ENCODE measurements at regions of chr4 and their contacts with region 1.

Region 1: GRCh38 chr4:98928505-98929340 is at the start of gene EIF4E:
- DNase-seq: peak; percentile 90 to 100 (median 95)
- ATAC-seq: peak; percentile 82
- H3K4me3 ChIP-seq: peak within 1 kb of the TSS; percentile 96
- H3K4me3 Mint-ChIP-seq: peak within 1 kb of the TSS; percentile 98
- H3K27ac ChIP-seq: peak within 1 kb of the TSS; percentile 85 to 94
- H3K27ac Mint-ChIP-seq: peak within 1 kb of the TSS; percentile 98
- H3K4me1 ChIP-seq: peaks cover 17% of the 10 kb centered on the region
- H3K4me1 Mint-ChIP-seq: peaks cover 46% of the 10 kb centered on the region
- H3K27me3 ChIP-seq: no peaks in the 10 kb centered on the region
- H3K27me3 Mint-ChIP-seq: no peaks in the 10 kb centered on the region
- CTCF ChIP-seq: peak; percentile 34
- total RNA-seq, gene EIF4E: 47.2 to 49.2 TPM

Region 2: DNA sequence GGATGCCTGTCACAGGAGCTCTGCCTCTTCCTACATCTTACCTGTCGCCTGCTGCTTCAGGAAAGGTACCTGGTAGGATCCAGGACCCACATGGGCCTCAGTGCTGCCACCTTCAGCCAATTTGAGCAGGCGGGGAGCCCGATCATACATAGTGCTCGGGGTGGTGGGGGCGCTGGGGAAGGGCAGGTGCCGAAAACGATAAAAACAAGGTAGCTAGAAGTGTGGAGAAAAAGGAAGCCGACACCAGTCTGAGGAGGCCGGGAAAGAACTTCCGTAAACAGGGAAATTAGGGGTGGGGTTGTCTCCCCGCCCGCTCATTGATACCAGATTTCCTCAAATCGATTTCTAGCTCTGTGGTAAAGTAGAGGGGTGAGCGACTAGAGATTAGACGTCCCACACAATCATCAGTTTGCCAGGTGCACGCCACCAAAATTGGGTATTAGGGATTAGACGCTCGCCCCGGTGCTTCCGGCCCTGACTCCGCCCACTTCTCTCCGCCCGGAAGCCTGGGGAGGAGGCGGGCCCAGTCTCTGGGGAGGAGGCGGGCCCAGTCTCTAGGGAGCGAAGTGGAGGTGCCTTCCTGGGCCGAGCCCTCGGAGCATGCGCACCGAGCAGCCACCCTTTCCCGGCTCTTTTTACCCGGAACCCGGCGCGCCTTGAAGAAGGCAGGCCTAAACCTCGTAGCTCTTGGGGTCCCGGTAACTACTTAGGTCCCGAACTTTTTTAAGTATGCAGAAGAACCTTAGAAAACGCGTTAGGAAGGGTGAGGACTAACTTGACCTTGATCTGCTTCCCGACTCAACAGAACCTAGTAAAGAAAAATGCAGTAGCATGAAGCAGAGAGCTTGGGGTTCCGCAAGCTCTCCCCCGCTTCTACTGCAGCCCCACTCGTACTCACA is 785.5 kb before region 1 on chr4 and contains the start of gene STPG2:
- CTCF ChIA-PET with region 1: interaction called, 3 read pairs
- POLR2A ChIA-PET with region 1: interaction called, 12 read pairs
- intact Hi-C with region 1: loop called in 1 of 2 experiments (anchors 2 kb)
- DNase-seq: peak; percentile 85 to 97 (median 94)
- ATAC-seq: peak; percentile 98
- H3K4me3 ChIP-seq: peak within 1 kb of the TSS; percentile 88
- H3K4me3 Mint-ChIP-seq: peak within 1 kb of the TSS; percentile 90
- H3K27ac ChIP-seq: peak within 1 kb of the TSS; percentile 75 to 96
- H3K27ac Mint-ChIP-seq: peak within 1 kb of the TSS; percentile 93
- H3K4me1 ChIP-seq: peaks cover 17% of the 10 kb centered on the region
- H3K4me1 Mint-ChIP-seq: peaks cover 21% of the 10 kb centered on the region
- H3K27me3 ChIP-seq: no peaks in the 10 kb centered on the region
- H3K27me3 Mint-ChIP-seq: no peaks in the 10 kb centered on the region
- CTCF ChIP-seq: peak; percentile 73
- total RNA-seq, gene STPG2: 0.22 to 0.28 TPM

Region 3: DNA sequence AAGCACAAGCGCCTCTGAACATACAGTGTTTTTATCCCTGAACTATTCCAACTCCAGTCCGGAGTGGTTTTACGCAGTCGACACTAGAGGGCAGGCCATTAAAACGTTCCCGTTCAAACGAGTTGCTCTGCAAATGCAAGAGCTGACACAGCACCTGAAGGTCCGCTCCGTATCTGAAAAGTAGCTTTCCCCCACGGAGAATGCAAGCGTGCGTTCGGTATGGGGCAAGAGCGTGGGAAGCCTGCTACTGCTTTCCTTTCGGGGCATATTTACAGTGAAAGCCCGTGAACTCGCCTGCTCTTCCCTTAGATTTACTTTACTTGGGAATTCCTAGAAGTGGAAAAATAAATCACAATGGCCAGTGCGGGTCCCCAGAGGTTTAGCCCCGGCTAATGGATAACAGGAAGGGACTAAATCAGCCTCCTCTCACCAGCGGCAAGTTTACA is 461.1 kb before region 1 on chr4:
- CTCF ChIA-PET with region 1: interaction called, 8 read pairs
- POLR2A ChIA-PET with region 1: interaction called, 5 read pairs
- intact Hi-C with region 1: loop called in 1 of 2 experiments (anchors 5 kb)
- DNase-seq: peak; percentile 48 to 84 (median 62)
- ATAC-seq: peak; percentile 97
- H3K4me3 ChIP-seq: peak overlapping the region; percentile 32
- H3K4me3 Mint-ChIP-seq: peak overlapping the region; percentile 59
- H3K27ac ChIP-seq: no peak overlapping the region
- H3K27ac Mint-ChIP-seq: no peak overlapping the region
- H3K4me1 ChIP-seq: peaks cover 18% of the 10 kb centered on the region
- H3K4me1 Mint-ChIP-seq: peaks cover 24% of the 10 kb centered on the region
- H3K27me3 ChIP-seq: no peaks in the 10 kb centered on the region
- H3K27me3 Mint-ChIP-seq: no peaks in the 10 kb centered on the region
- CTCF ChIP-seq: peak; percentile 84

Region 4: DNA sequence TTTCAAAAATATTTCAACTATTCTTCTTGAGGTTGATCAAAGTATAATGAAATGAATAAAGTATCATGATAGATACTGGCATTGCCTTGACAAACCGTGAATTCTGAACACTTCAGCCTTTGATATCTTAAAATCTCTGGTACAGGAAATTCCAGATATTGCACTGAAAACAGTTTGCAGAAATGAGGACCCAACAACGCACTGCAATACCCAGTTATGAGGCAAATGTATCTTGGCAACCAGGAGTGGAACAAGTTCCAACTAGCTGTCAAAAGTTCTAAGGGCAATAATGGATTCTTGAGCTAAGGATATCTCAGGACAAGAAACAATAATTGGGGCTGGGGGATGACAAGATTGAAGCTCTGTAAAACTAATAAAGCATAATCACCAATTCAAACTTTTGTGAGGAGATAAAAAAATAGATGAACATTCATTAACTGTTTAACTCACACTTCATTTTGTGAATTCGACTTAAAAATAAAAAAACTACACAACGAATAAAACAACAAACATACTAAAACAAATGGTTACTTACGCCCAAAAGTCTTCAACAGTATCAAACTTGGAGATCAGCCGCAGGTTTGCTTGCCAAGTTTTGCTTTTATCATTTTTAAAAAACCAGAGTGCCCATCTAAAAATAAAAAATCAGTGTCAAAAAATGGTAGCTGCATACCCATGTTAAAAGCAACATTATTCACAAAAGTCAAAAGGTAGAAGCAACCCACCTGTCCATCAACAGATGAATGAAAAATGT is 37.8 kb before region 1 on chr4:
- CTCF ChIA-PET with region 1: interaction called, 3 read pairs
- POLR2A ChIA-PET with region 1: interaction called, 3 read pairs
- intact Hi-C with region 1: loop called in 1 of 2 experiments (anchors 5 kb)
- DNase-seq: no peak
- ATAC-seq: no peak
- H3K4me3 ChIP-seq: no peak overlapping the region
- H3K4me3 Mint-ChIP-seq: no peak overlapping the region
- H3K27ac ChIP-seq: no peak overlapping the region
- H3K27ac Mint-ChIP-seq: no peak overlapping the region
- H3K4me1 ChIP-seq: no peaks in the 10 kb centered on the region
- H3K4me1 Mint-ChIP-seq: peaks cover 23% of the 10 kb centered on the region
- H3K27me3 ChIP-seq: no peaks in the 10 kb centered on the region
- H3K27me3 Mint-ChIP-seq: no peaks in the 10 kb centered on the region
- CTCF ChIP-seq: no peak

Region 5: DNA sequence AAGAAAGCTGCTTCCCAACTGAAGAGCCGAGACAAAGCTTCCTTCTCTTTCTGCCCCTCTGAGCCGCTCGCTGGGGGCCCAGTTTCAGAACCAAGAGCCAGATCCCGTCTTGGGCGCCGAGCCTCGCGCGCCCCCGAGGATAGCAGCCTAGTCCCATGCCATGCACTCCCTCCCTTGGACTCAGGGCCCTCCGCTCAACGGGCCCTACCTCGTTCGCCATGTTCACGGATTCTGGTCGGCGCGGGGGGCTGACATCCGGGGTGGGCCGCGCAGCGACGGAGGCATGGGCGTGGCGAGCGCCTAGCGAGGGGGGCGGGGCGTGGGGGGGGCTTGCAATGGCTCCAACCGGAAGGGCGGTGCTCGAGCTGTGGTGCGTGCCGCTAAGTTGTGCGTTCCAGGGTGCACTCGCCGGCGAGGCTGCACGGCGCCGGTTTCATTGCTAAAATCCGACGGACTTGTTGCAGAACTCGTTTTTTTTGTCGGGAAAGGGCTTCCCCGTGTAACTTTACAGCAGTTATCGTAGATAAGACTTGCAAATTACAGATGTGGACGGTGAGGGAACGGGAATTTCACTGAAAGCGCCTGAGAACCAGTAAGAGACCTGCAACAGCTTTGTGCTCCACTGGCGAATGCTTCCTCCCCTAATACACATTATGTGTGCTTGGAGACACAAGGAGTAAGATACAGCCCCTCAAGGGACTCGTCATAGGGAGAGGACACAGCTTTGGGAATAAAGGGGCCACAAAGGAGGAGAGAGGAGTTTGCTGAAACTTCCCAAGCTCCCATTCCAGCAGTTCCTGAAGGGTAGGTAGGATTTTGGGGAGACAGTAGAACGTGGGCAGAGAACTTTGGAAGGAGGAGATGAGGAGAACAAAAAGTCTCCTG is 160.0 kb after region 1 on chr4 and contains the start of gene ADH5:
- CTCF ChIA-PET with region 1: no interaction called
- POLR2A ChIA-PET with region 1: interaction called, 27 read pairs
- intact Hi-C with region 1: loop called in 1 of 2 experiments (anchors 5 kb)
- DNase-seq: peak; percentile 86 to 96 (median 91)
- ATAC-seq: peak; percentile 95
- H3K4me3 ChIP-seq: peak within 1 kb of the TSS; percentile 93
- H3K4me3 Mint-ChIP-seq: peak within 1 kb of the TSS; percentile 95
- H3K27ac ChIP-seq: peak within 1 kb of the TSS; percentile 76 to 82
- H3K27ac Mint-ChIP-seq: peak within 1 kb of the TSS; percentile 93
- H3K4me1 ChIP-seq: peaks cover 25% of the 10 kb centered on the region
- H3K4me1 Mint-ChIP-seq: peaks cover 65% of the 10 kb centered on the region
- H3K27me3 ChIP-seq: no peaks in the 10 kb centered on the region
- H3K27me3 Mint-ChIP-seq: no peaks in the 10 kb centered on the region
- CTCF ChIP-seq: no peak
- total RNA-seq, gene ADH5: 49.1 to 52.0 TPM

Region 6: DNA sequence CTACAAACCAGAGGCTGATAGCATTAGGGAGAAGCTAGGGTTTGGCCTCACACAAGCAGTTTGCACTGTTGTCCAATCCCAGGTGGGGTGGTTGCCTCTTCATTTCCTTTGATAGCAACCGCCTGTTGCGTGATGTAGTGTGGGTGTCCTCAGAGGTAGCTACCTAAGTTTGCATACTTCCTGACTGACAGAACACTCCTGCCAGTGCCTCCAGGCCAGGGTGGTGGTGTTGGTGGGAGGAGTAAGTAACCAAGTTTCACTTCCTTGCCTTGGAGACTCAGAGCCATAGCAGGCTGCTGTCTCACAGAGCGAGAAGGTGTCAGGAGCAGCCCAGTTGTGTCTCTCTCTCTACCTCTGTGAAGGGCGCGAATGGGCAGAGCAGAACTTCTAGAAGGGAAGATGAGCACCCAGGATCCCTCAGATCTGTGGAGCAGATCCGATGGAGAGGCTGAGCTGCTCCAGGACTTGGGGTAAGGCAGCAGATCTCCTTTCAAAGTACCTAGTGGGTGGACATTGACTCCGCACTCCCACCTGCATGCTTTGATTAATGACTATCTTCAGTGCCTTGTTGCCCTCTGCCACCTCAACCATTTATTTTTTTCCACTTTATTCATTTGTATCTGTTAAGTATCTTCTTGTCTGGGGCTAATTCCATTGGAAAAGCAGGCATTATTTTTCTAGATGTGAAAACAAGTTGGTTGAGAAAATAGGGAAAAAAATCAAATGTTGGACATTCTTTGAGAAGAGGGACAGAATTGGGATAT is 888.0 kb after region 1 on chr4 and contains the start of gene DAPP1:
- CTCF ChIA-PET with region 1: no interaction called
- POLR2A ChIA-PET with region 1: no interaction called
- intact Hi-C with region 1: loop called in 1 of 2 experiments (anchors 10 kb)
- DNase-seq: peak; percentile 60 to 92 (median 72)
- ATAC-seq: peak; percentile 97
- H3K4me3 ChIP-seq: peak within 1 kb of the TSS; percentile 72
- H3K4me3 Mint-ChIP-seq: peak within 1 kb of the TSS; percentile 92
- H3K27ac ChIP-seq: peak within 1 kb of the TSS; percentile 64 to 66
- H3K27ac Mint-ChIP-seq: peak within 1 kb of the TSS; percentile 91
- H3K4me1 ChIP-seq: peaks cover 30% of the 10 kb centered on the region
- H3K4me1 Mint-ChIP-seq: peaks cover 64% of the 10 kb centered on the region
- H3K27me3 ChIP-seq: no peaks in the 10 kb centered on the region
- H3K27me3 Mint-ChIP-seq: no peaks in the 10 kb centered on the region
- CTCF ChIP-seq: no peak
- total RNA-seq, gene DAPP1: 8.3 to 9.1 TPM